MCF 10A (cell line): ENCODE measurements at regions of chr2 and their contacts with region 1.

Region 1: GRCh38 chr2:37389989-37390765 is 45.7 kb downstream of the QPCT start:
- DNase-seq: peak; percentile 92
- H3K4me3 Mint-ChIP-seq: no peak overlapping the region
- H3K27ac Mint-ChIP-seq: peak overlapping the region; percentile 64
- H3K4me1 Mint-ChIP-seq: peaks cover 19% of the 10 kb centered on the region
- H3K27me3 Mint-ChIP-seq: no peaks in the 10 kb centered on the region
- CTCF ChIP-seq: no peak

Region 2: GRCh38 chr2:37376421-37377186 is 13.6 kb before region 1 on chr2:
- CTCF ChIA-PET with region 1: interaction called, 26 read pairs
- POLR2A ChIA-PET with region 1: interaction called, 19 read pairs
- intact Hi-C with region 1: no loop called
- DNase-seq: peak; percentile 79
- H3K4me3 Mint-ChIP-seq: peak overlapping the region; percentile 55
- H3K27ac Mint-ChIP-seq: peak overlapping the region; percentile 61
- H3K4me1 Mint-ChIP-seq: peaks cover 27% of the 10 kb centered on the region
- H3K27me3 Mint-ChIP-seq: no peaks in the 10 kb centered on the region
- CTCF ChIP-seq: no peak

Region 3: GRCh38 chr2:37825586-37825985 is 435.4 kb after region 1 on chr2:
- CTCF ChIA-PET with region 1: interaction called, 103 read pairs
- POLR2A ChIA-PET with region 1: no interaction called
- intact Hi-C with region 1: no loop called
- DNase-seq: no peak
- H3K4me3 Mint-ChIP-seq: no peak overlapping the region
- H3K27ac Mint-ChIP-seq: no peak overlapping the region
- H3K4me1 Mint-ChIP-seq: no peaks in the 10 kb centered on the region
- H3K27me3 Mint-ChIP-seq: no peaks in the 10 kb centered on the region
- CTCF ChIP-seq: no peak

Region 4: GRCh38 chr2:37832590-37833197 is 442.5 kb after region 1 on chr2:
- CTCF ChIA-PET with region 1: interaction called, 103 read pairs
- POLR2A ChIA-PET with region 1: no interaction called
- intact Hi-C with region 1: no loop called
- DNase-seq: peak; percentile 89
- H3K4me3 Mint-ChIP-seq: no peak overlapping the region
- H3K27ac Mint-ChIP-seq: no peak overlapping the region
- H3K4me1 Mint-ChIP-seq: peaks cover 5% of the 10 kb centered on the region
- H3K27me3 Mint-ChIP-seq: no peaks in the 10 kb centered on the region
- CTCF ChIP-seq: peak; percentile 79

Region 5: GRCh38 chr2:37871456-37872191 is 481.4 kb after region 1 on chr2:
- CTCF ChIA-PET with region 1: interaction called, 137 read pairs
- POLR2A ChIA-PET with region 1: interaction called, 12 read pairs
- intact Hi-C with region 1: no loop called
- DNase-seq: peak; percentile 71
- H3K4me3 Mint-ChIP-seq: no peak overlapping the region
- H3K27ac Mint-ChIP-seq: no peak overlapping the region
- H3K4me1 Mint-ChIP-seq: peaks cover 14% of the 10 kb centered on the region
- H3K27me3 Mint-ChIP-seq: peaks cover 26% of the 10 kb centered on the region
- CTCF ChIP-seq: no peak

Region 6: GRCh38 chr2:37890893-37891495 is 500.8 kb after region 1 on chr2:
- CTCF ChIA-PET with region 1: interaction called, 12 read pairs
- POLR2A ChIA-PET with region 1: no interaction called
- intact Hi-C with region 1: no loop called
- DNase-seq: peak; percentile 73
- H3K4me3 Mint-ChIP-seq: no peak overlapping the region
- H3K27ac Mint-ChIP-seq: no peak overlapping the region
- H3K4me1 Mint-ChIP-seq: peaks cover 14% of the 10 kb centered on the region
- H3K27me3 Mint-ChIP-seq: peaks cover 6% of the 10 kb centered on the region
- CTCF ChIP-seq: peak; percentile 66